Aorta (tissue), 5 donors: ENCODE measurements at regions of chr2 and their contacts with region 1.

Region 1: DNA sequence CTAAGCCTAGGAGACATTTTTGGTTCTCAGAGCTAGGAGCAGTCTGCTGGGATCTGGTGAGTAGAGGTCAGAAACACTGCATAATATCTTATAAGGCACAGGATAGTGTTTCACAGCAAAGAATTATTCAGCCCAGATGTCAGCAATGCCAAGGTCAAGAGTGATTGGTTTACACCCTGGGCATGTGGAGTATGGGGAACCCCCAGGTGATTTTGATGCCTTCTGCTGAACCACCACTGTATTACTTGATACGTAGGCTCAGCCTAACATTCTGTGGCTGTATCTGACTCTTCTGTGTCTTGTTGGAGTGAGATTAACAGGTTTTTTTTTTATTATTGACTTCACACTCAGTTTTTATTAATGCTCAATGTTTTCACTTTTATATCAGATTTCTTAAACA is 6.0 kb downstream of the DDX18 start:
- DNase-seq: no peak
- ATAC-seq: no peak
- H3K4me3 ChIP-seq: no peak overlapping the region
- H3K27ac ChIP-seq: no peak overlapping the region
- H3K4me1 ChIP-seq: no peaks in the 10 kb centered on the region
- H3K27me3 ChIP-seq: no peaks in the 10 kb centered on the region

Region 2: GRCh38 chr2:117703858-117704257 is 116.6 kb before region 1 on chr2:
- intact Hi-C with region 1: no loop called
- DNase-seq: no peak
- ATAC-seq: no peak
- H3K4me3 ChIP-seq: no peak overlapping the region
- H3K27ac ChIP-seq: no peak overlapping the region
- H3K4me1 ChIP-seq: no peaks in the 10 kb centered on the region
- H3K27me3 ChIP-seq: no peaks in the 10 kb centered on the region

Region 3: GRCh38 chr2:117856415-117857210 is 36.2 kb after region 1 on chr2:
- intact Hi-C with region 1: no loop called
- DNase-seq: no peak
- ATAC-seq: no peak
- H3K4me3 ChIP-seq: no peak overlapping the region
- H3K27ac ChIP-seq: no peak overlapping the region
- H3K4me1 ChIP-seq: no peaks in the 10 kb centered on the region
- H3K27me3 ChIP-seq: no peaks in the 10 kb centered on the region

Region 4: DNA sequence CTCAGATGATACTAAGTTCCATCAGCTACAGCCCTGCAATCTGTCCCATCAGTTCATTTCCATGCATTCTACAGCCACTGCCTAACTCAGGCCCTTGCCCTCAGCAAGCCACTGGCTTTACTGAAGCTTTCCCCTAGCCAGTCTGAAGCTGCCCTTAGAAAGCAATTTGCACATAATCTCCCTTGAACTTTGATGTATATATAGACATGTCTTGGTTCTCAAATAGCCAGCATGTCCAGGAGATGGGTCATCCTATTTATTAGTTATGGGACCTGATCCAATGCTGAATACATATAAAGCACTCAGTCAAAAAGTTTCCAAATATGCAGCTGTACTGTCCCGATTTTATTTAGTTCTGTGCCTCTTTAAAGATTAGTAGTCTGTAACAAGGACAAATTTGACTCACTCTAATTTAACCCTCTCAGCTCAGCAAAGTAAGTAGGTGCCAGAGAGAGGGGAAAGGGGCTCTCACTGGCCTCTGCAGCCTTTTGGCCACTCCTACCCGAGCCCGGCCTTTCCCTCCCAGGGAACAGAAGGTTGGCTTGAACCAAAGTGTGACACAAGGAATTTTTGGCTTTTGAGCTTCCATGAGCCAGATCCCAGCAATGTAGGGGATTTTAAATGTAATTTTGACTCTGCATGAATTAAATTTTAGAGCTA is 122.7 kb after region 1 on chr2:
- intact Hi-C with region 1: loop called in 1 of 2 experiments (anchors 10 kb)
- DNase-seq: no peak
- ATAC-seq: no peak
- H3K4me3 ChIP-seq: no peak overlapping the region
- H3K27ac ChIP-seq: no peak overlapping the region
- H3K4me1 ChIP-seq: no peaks in the 10 kb centered on the region
- H3K27me3 ChIP-seq: no peaks in the 10 kb centered on the region